ENCODE measurements at regions of chr3 and their contacts with region 1.

Region 1: GRCh38 chr3:47380601-47381316 is at the start of gene PTPN23:
- DNase-seq: peak; percentile 99
- ATAC-seq: peak; percentile 74 to 87 (median 80)
- H3K4me3 ChIP-seq: peak within 1 kb of the TSS; percentile 85
- H3K4me3 Mint-ChIP-seq: peak within 1 kb of the TSS; percentile 99
- H3K27ac ChIP-seq: peak within 1 kb of the TSS; percentile 89
- H3K27ac Mint-ChIP-seq: peak within 1 kb of the TSS; percentile 99 to 100
- H3K4me1 ChIP-seq: peaks cover 24% of the 10 kb centered on the region
- H3K4me1 Mint-ChIP-seq: peaks cover 40 to 49% of the 10 kb centered on the region in 2 donors
- H3K27me3 ChIP-seq: no peaks in the 10 kb centered on the region
- H3K27me3 Mint-ChIP-seq: no peaks in the 10 kb centered on the region
- CTCF ChIP-seq: no peak
- total RNA-seq, gene PTPN23: 49.3 to 73.6 (median 52.0) TPM

Region 2: GRCh38 chr3:47243419-47244147 is 137.2 kb before region 1 on chr3:
- intact Hi-C with region 1: no loop called
- DNase-seq: no peak
- ATAC-seq: no peak
- H3K4me3 ChIP-seq: no peak overlapping the region
- H3K4me3 Mint-ChIP-seq: no peak overlapping the region
- H3K27ac ChIP-seq: no peak overlapping the region
- H3K27ac Mint-ChIP-seq: no peak overlapping the region
- H3K4me1 ChIP-seq: no peaks in the 10 kb centered on the region
- H3K4me1 Mint-ChIP-seq: no peaks in the 10 kb centered on the region
- H3K27me3 ChIP-seq: no peaks in the 10 kb centered on the region
- H3K27me3 Mint-ChIP-seq: no peaks in the 10 kb centered on the region
- CTCF ChIP-seq: no peak

Region 3: GRCh38 chr3:47282424-47283192 is 98.2 kb before region 1 on chr3 and contains the starts of genes KIF9 and KLHL18:
- intact Hi-C with region 1: loop called (anchors 2 kb)
- DNase-seq: peak; percentile 94 to 99
- ATAC-seq: peak; percentile 85 to 96 (median 87)
- H3K4me3 ChIP-seq: peak within 1 kb of the TSS; percentile 92
- H3K4me3 Mint-ChIP-seq: peak within 1 kb of the TSS; percentile 99
- H3K27ac ChIP-seq: peak within 1 kb of the TSS; percentile 98
- H3K27ac Mint-ChIP-seq: peak within 1 kb of the TSS; percentile 97 to 100
- H3K4me1 ChIP-seq: peaks cover 37% of the 10 kb centered on the region
- H3K4me1 Mint-ChIP-seq: peaks cover 37 to 43% of the 10 kb centered on the region in 2 donors
- H3K27me3 ChIP-seq: no peaks in the 10 kb centered on the region
- H3K27me3 Mint-ChIP-seq: no peaks in the 10 kb centered on the region
- CTCF ChIP-seq: no peak
- total RNA-seq, gene KIF9: 11.4 to 21.9 (median 21.4) TPM
- total RNA-seq, gene KLHL18: 37.3 to 47.9 (median 45.2) TPM

Region 4: DNA sequence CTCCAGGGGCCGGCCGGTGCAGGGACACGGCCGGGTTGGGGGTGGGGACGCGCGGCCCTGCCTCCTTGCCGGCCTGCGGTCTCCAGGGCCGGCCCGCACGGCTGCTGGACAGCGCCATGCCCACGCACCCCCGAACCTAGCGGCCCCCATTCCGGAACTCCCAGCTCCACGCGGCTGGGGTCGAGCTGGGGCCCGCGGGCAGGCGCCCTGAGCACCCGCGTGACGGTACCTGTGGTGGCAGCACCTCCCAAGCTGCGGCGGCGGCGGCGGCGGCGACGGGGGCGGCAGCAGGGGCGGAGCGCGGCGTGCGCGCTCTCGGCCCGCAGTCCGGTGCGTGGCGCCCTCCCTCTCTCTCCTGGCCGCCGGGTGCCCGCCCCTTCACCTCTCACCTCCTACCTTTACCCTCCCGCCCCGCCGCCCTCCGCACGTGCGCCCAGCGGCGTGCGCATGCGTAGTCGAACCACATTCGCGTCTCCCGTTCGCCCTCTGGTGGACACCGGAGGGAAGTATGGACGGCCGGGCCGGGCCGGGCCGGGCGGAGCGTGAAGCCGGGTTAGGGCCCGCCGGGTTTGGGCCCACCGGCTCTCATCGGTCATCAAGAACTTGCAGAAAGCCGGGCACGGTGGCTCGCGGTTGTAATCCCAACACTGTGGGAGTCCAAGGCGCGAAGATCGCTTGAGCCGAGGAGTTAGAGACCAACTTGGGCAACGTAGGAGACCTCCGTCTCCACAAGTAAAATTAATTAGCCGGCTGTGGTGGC is 95.0 kb after region 1 on chr3 and contains the start of gene SCAP:
- intact Hi-C with region 1: loop called (anchors 1 kb)
- DNase-seq: peak; percentile 95 to 98
- ATAC-seq: peak; percentile 92 to 96 (median 93)
- H3K4me3 ChIP-seq: peak within 1 kb of the TSS; percentile 83
- H3K4me3 Mint-ChIP-seq: peak within 1 kb of the TSS; percentile 94
- H3K27ac ChIP-seq: peak within 1 kb of the TSS; percentile 86
- H3K27ac Mint-ChIP-seq: peak within 1 kb of the TSS; percentile 90 to 95
- H3K4me1 ChIP-seq: peaks cover 24% of the 10 kb centered on the region
- H3K4me1 Mint-ChIP-seq: peaks cover 23 to 30% of the 10 kb centered on the region in 2 donors
- H3K27me3 ChIP-seq: no peaks in the 10 kb centered on the region
- H3K27me3 Mint-ChIP-seq: no peaks in the 10 kb centered on the region
- CTCF ChIP-seq: peak; percentile 95
- total RNA-seq, gene SCAP: 63.9 to 104 (median 82.7) TPM

Measured in natural killer cell (primary cell).